IMR-90 (cell line): ENCODE measurements at regions of chr18 and their contacts with region 1.

Region 1: DNA sequence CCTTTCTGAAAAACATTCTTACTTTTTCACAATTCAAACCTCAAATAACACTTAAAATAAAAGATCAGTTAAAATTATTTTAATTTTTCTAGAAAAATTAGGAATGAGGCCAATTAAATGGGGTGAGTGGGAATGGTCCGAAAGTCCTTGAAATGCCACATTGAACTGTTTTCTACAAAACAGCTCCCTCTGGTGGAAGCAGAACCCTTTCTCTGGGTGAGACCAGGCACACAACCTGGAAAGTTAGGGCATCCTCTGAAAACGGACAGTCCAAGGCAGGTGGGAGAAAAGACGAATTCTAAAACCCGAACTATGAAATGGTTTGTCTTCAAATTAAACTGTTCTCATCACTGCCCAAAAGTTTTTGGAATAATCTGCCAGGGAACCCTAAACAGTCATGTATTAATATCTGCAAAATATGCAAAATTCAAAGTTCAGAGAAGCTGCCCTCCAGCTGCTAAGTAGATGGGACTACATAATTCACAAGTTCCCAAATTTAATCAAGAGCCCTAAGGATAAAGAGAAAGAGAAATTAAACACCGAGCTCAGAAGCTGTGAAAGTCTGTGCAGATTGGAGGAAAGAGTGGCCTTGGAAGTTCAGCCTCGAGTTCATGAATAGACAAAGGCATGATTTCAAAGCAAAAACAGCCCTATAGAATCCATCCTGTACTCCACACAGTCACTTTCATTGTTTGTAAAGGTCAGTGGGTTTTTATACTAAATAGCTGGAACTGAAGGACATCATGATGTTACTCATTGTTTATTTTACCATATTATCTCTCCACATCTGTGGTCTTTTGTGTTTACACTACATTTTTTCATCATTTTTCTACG is 108.3 kb downstream of the PIEZO2 start:
- DNase-seq: peak; percentile 69
- ATAC-seq: peak; percentile 68
- H3K4me3 ChIP-seq: no peak overlapping the region
- H3K27ac ChIP-seq: peak overlapping the region; percentile 50; the same call in 1 of the 2 replicates
- H3K4me1 ChIP-seq: peaks cover 11% of the 10 kb centered on the region
- H3K27me3 ChIP-seq: no peaks in the 10 kb centered on the region
- CTCF ChIP-seq: peak; percentile 69
- POLR2A ChIP-seq: no peak
- RAD21 ChIP-seq: peak; percentile 65

Region 2: DNA sequence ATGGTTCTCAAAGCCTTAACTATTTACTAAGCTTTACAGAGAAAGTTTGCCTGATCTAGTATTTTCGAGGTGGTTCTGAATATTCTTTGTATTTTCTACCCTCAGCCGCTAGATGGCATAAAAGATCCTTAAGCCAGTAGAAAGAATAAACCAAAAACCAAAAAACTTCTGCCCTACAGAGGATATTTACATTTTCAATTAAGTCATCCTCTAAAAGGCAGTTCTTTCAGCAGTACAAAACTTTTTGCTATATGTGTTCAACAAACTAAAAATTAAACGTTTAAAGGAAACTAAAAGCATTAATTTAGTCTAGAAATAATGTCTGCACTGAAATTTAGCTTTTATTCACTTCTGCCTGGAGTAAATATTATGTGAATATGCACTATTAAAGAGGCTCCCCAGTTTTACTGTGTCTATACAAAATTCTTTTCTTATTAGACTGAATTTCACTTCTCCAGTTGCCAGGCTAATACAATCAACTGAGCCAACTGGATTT is 189.2 kb before region 1 on chr18:
- CTCF ChIA-PET with region 1: interaction called, 10 read pairs
- POLR2A ChIA-PET with region 1: no interaction called
- dilution Hi-C with region 1: no loop called
- in situ Hi-C with region 1: loop called (anchors 5 kb)
- intact Hi-C with region 1: loop called (anchors 1 kb)
- DNase-seq: peak; percentile 81
- ATAC-seq: peak; percentile 90
- H3K4me3 ChIP-seq: no peak overlapping the region
- H3K27ac ChIP-seq: peak overlapping the region; percentile 50; the same call in 1 of the 2 replicates
- H3K4me1 ChIP-seq: peaks cover 2% of the 10 kb centered on the region; the same call in 1 of the 2 replicates
- H3K27me3 ChIP-seq: no peaks in the 10 kb centered on the region
- CTCF ChIP-seq: peak; percentile 93
- POLR2A ChIP-seq: no peak
- RAD21 ChIP-seq: peak; percentile 93

Region 3: GRCh38 chr18:11136241-11136640 is 95.2 kb after region 1 on chr18:
- CTCF ChIA-PET with region 1: no interaction called
- POLR2A ChIA-PET with region 1: no interaction called
- dilution Hi-C with region 1: no loop called
- in situ Hi-C with region 1: no loop called
- intact Hi-C with region 1: loop called (anchors 5 kb)
- DNase-seq: peak; percentile 69
- ATAC-seq: peak; percentile 95
- H3K4me3 ChIP-seq: no peak overlapping the region
- H3K27ac ChIP-seq: peak overlapping the region; percentile 84; the same call in 1 of the 2 replicates
- H3K4me1 ChIP-seq: peaks cover 12% of the 10 kb centered on the region
- H3K27me3 ChIP-seq: no peaks in the 10 kb centered on the region
- CTCF ChIP-seq: no peak
- POLR2A ChIP-seq: no peak
- RAD21 ChIP-seq: no peak

Region 4: GRCh38 chr18:11518788-11519685 is 478.0 kb after region 1 on chr18:
- CTCF ChIA-PET with region 1: interaction called, 3 read pairs
- POLR2A ChIA-PET with region 1: no interaction called
- dilution Hi-C with region 1: no loop called
- in situ Hi-C with region 1: no loop called
- intact Hi-C with region 1: loop called (anchors 10 kb)
- DNase-seq: peak; percentile 55
- ATAC-seq: peak; percentile 86
- H3K4me3 ChIP-seq: no peak overlapping the region
- H3K27ac ChIP-seq: no peak overlapping the region
- H3K4me1 ChIP-seq: no peaks in the 10 kb centered on the region
- H3K27me3 ChIP-seq: peaks cover 2% of the 10 kb centered on the region; the same call in 1 of the 2 replicates
- CTCF ChIP-seq: peak; percentile 71
- POLR2A ChIP-seq: no peak
- RAD21 ChIP-seq: peak; percentile 70

Region 5: DNA sequence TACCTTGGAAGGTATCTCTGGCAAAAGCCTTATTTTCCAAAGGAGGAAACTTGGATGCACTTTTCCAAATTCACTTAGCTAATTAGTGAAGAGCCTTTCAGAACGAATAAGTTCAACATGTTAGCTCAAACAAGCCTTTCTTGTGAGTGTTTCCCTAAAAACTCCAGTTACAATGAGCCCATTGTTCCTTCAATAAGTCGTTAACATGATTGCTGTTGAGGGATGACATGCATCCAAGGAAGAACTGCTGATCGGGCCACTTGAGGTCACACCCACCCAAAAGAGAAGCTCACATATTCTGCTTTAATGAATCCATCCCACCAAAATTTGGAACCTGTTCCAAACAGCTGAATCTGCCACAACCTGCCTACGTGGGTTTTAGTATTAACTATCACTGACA is 520.3 kb after region 1 on chr18:
- CTCF ChIA-PET with region 1: no interaction called
- POLR2A ChIA-PET with region 1: no interaction called
- dilution Hi-C with region 1: no loop called
- in situ Hi-C with region 1: no loop called
- intact Hi-C with region 1: no loop called
- DNase-seq: no peak
- ATAC-seq: no peak
- H3K4me3 ChIP-seq: no peak overlapping the region
- H3K27ac ChIP-seq: no peak overlapping the region
- H3K4me1 ChIP-seq: no peaks in the 10 kb centered on the region
- H3K27me3 ChIP-seq: peaks cover 11% of the 10 kb centered on the region
- CTCF ChIP-seq: no peak
- POLR2A ChIP-seq: no peak
- RAD21 ChIP-seq: no peak